H1 (cell line): ENCODE measurements at regions of chr2 and their contacts with region 1.

Region 1: DNA sequence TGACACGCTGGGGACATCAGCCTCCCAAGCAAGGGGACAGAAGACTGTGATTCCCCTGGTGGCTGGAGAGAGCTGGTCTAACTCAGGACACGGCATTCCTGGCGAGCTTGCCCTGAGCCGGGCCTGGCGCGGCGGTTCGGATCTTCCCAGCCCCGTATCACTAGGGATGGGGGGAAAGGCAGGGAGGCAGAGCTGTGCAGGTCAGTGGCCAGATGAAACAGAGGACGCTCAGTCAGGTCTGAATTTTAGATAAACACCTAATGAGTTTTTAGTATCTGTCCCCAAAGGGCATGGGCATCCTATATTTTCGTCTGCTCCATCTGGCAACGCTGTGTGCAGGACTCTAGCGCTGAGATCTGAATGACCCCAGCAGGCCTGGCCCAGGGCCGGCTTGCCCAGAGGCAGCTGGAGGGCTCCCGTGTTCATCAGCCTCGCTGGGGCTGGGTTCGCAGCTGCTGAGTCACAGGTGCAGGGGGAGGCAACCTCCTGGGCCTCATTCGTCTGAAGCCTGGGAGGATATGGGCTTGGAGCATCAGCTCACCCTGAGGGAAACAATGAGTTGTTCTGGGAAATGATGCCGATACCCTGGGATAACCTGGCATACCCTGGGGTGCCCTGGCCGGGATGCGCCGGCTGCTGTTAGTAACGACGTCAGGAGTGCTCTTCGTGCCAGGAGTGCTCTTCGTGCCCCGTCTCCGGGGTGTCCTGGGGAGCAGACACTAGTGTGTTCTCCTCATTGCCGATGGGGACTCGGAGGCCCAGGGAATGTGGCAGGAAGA is 48.1 kb upstream of the HPCAL1 start:
- DNase-seq: no peak
- H3K4me3 ChIP-seq: no peak overlapping the region
- H3K27ac ChIP-seq: no peak overlapping the region
- H3K4me1 ChIP-seq: no peaks in the 10 kb centered on the region
- H3K27me3 ChIP-seq: no peaks in the 10 kb centered on the region
- CTCF ChIP-seq: no peak
- EP300 ChIP-seq: no peak
- POLR2A ChIP-seq: no peak
- RAD21 ChIP-seq: no peak

Region 2: DNA sequence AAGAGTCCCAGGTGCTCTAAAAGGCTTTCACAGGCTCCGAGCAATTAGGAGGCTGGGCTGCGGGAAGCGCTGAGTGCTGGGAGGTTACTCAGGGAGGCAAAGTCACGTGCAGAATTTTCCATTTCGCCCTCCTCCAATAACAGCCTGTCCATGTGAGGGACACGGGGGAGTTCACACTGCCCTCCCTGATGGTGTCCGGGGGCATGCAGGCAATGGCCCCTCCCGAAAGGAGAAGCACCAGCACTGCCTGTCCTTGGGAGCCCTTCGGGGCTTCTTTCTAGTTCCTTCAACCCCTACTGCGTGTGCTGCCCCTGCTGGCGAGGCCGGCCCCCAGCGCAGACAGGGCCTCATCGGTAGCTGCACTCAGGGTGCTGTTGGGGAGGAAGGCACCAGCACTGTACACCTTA is 15.0 kb before region 1 on chr2:
- CTCF ChIA-PET with region 1: interaction called, 11 read pairs
- POLR2A ChIA-PET with region 1: no interaction called
- DNase-seq: peak in 1 of 2 experiments; percentile 69
- H3K4me3 ChIP-seq: no peak overlapping the region
- H3K27ac ChIP-seq: no peak overlapping the region
- H3K4me1 ChIP-seq: peaks cover 0 to 3% (median 0%) of the 10 kb centered on the region in 4 experiments; a peak in 1 of 7 replicates
- H3K27me3 ChIP-seq: no peaks in the 10 kb centered on the region
- CTCF ChIP-seq: peak in 2 of 3 experiments; percentile 52 to 67; a peak in 3 of 4 replicates
- EP300 ChIP-seq: no peak
- POLR2A ChIP-seq: no peak
- RAD21 ChIP-seq: peak; percentile 35 to 55; a peak in 3 of 4 replicates

Region 3: GRCh38 chr2:10267551-10268465 is 13.2 kb after region 1 on chr2:
- CTCF ChIA-PET with region 1: interaction called, 22 read pairs
- POLR2A ChIA-PET with region 1: no interaction called
- DNase-seq: no peak
- H3K4me3 ChIP-seq: no peak overlapping the region
- H3K27ac ChIP-seq: no peak overlapping the region
- H3K4me1 ChIP-seq: peaks cover 0 to 2% (median 0%) of the 10 kb centered on the region in 4 experiments; a peak in 1 of 7 replicates
- H3K27me3 ChIP-seq: no peaks in the 10 kb centered on the region
- CTCF ChIP-seq: peak; percentile 44 to 50 (median 49)
- EP300 ChIP-seq: no peak
- POLR2A ChIP-seq: no peak
- RAD21 ChIP-seq: peak; percentile 32 to 52; a peak in 3 of 4 replicates

Region 4: GRCh38 chr2:10312437-10312957 is 57.9 kb after region 1 on chr2:
- CTCF ChIA-PET with region 1: no interaction called
- POLR2A ChIA-PET with region 1: no interaction called
- DNase-seq: no peak
- H3K4me3 ChIP-seq: no peak overlapping the region
- H3K27ac ChIP-seq: no peak overlapping the region
- H3K4me1 ChIP-seq: peaks cover 0 to 2% (median 0%) of the 10 kb centered on the region in 4 experiments; a peak in 1 of 7 replicates
- H3K27me3 ChIP-seq: no peaks in the 10 kb centered on the region
- CTCF ChIP-seq: no peak
- EP300 ChIP-seq: no peak
- POLR2A ChIP-seq: no peak
- RAD21 ChIP-seq: no peak